Breast epithelium (tissue), 4 donors: ENCODE measurements at regions of chr10 and their contacts with region 1.

Region 1: GRCh38 chr10:84038035-84038434 is 101.3 kb upstream of the GHITM start:
- DNase-seq: no peak
- H3K4me3 ChIP-seq: no peak overlapping the region
- H3K27ac ChIP-seq: no peak overlapping the region
- H3K4me1 ChIP-seq: no peaks in the 10 kb centered on the region
- H3K27me3 ChIP-seq: no peaks in the 10 kb centered on the region
- CTCF ChIP-seq: no peak
- POLR2A ChIP-seq: no peak

Region 2: DNA sequence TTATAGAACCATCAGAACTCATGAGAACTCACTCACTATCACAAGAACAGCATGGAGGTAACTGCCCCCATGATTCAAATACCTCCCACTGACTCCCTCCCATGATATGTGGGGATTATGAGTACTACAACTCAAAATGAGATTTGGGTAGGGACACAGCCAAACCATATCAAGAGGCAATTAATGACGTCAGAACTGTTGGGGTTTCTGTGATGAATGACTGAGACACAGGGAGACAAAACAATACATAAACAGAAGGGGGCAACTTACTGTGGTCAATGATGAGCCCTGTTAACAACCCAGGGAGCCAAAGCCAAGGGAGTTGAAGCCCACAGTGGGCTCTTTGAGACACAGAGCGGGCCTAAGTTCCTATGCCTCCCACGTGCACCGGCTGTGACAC is 70.0 kb before region 1 on chr10:
- intact Hi-C with region 1: no loop called
- DNase-seq: no peak
- H3K4me3 ChIP-seq: no peak overlapping the region
- H3K27ac ChIP-seq: no peak overlapping the region
- H3K4me1 ChIP-seq: no peaks in the 10 kb centered on the region
- H3K27me3 ChIP-seq: no peaks in the 10 kb centered on the region
- CTCF ChIP-seq: no peak
- POLR2A ChIP-seq: no peak

Region 3: GRCh38 chr10:84862551-84862950 is 824.5 kb after region 1 on chr10:
- intact Hi-C with region 1: loop called (anchors 5 kb)
- DNase-seq: no peak
- H3K4me3 ChIP-seq: no peak overlapping the region
- H3K27ac ChIP-seq: no peak overlapping the region
- H3K4me1 ChIP-seq: no peaks in the 10 kb centered on the region
- H3K27me3 ChIP-seq: no peaks in the 10 kb centered on the region
- CTCF ChIP-seq: no peak
- POLR2A ChIP-seq: no peak